Activated CD8-positive, alpha-beta T cell treated with anti-CD3 and anti-CD28 coated beads, Interleukin-2, amount 10 ng/mL, durations not matched to agents 7 days and 5 days (primary cell): ENCODE measurements at regions of chr1 and their contacts with region 1.

Region 1: GRCh38 chr1:67194209-67194863 is 28.1 kb downstream of the IL23R start:
- DNase-seq: no peak
- ATAC-seq: peak; percentile 62
- H3K4me3 Mint-ChIP-seq: peak overlapping the region; percentile 2
- H3K27ac Mint-ChIP-seq: peak overlapping the region; percentile 44
- H3K4me1 Mint-ChIP-seq: peaks cover 14% of the 10 kb centered on the region
- H3K27me3 Mint-ChIP-seq: no peaks in the 10 kb centered on the region

Region 2: DNA sequence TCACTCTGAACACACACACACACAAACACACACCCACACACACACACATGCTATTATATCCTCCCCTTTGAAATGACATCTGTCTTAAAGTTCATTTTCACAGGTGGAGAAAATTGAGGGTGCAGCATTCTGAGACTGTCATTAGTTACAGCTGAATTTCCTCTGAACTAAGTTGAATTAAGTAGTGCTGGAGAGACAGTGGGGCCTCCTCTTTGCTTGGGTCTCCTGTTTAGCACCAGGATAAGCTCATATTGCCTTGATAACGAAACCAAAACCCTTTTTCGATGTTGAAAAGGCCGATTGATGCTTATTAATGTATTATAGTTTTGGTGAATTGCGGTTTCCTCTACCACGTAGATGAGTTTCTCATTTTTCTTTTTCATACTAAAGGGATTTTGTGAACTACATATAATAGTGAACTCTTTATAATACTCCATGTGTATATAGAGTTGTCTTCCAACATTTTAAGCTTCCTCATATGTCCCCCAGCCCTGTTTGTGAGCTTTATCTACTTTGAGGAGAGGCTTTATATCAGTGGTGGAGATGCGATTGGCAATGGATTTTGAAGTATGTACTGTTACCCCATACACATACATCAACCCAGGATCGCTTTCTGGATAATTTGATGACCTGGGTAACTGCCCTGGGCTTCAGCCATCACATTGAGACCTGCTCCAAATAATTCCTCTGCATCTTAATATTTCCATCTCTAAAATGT is 424.7 kb before region 1 on chr1:
- CTCF ChIA-PET with region 1: no interaction called
- POLR2A ChIA-PET with region 1: no interaction called
- DNase-seq: peak; percentile 33
- ATAC-seq: peak; percentile 82
- H3K4me3 Mint-ChIP-seq: peak overlapping the region; percentile 64
- H3K27ac Mint-ChIP-seq: peak overlapping the region; percentile 53
- H3K4me1 Mint-ChIP-seq: peaks cover 25% of the 10 kb centered on the region
- H3K27me3 Mint-ChIP-seq: no peaks in the 10 kb centered on the region

Region 3: DNA sequence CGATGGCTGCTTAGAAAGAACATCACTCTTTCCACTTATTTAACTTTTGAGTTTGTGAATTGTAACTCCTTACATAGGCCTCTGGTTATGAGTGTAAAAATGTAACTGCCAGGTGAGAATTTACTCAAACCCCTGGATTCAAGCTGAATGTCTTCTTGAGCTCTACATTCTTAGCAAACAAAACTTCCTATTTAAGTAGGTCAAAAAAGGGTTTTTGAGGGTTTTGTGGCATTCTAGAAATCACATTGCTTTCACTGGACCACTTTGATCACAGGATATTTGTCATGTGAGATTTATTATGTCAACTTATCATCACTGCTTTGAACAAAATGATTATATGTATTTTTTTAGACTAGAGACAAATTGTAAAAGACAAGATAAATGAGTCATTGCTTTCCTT is 22.4 kb before region 1 on chr1:
- CTCF ChIA-PET with region 1: interaction called, 12 read pairs
- POLR2A ChIA-PET with region 1: interaction called, 8 read pairs
- DNase-seq: no peak
- ATAC-seq: peak; percentile 31
- H3K4me3 Mint-ChIP-seq: peak overlapping the region; percentile 50
- H3K27ac Mint-ChIP-seq: peak overlapping the region; percentile 85
- H3K4me1 Mint-ChIP-seq: peaks cover 49% of the 10 kb centered on the region
- H3K27me3 Mint-ChIP-seq: peaks cover 7% of the 10 kb centered on the region